Activated naive CD4-positive, alpha-beta T cell treated with anti-CD3 and anti-CD28 coated beads for 36 hours (primary cell): ENCODE measurements at regions of chr16 and their contacts with region 1.

Region 1: GRCh38 chr16:22190776-22191531 is 15.1 kb upstream of the EEF2K start:
- DNase-seq: peak; percentile 99
- H3K4me3 Mint-ChIP-seq: peak overlapping the region; percentile 83
- H3K27ac Mint-ChIP-seq: peak overlapping the region; percentile 98
- H3K4me1 Mint-ChIP-seq: peaks cover 60% of the 10 kb centered on the region
- H3K27me3 Mint-ChIP-seq: no peaks in the 10 kb centered on the region

Region 2: DNA sequence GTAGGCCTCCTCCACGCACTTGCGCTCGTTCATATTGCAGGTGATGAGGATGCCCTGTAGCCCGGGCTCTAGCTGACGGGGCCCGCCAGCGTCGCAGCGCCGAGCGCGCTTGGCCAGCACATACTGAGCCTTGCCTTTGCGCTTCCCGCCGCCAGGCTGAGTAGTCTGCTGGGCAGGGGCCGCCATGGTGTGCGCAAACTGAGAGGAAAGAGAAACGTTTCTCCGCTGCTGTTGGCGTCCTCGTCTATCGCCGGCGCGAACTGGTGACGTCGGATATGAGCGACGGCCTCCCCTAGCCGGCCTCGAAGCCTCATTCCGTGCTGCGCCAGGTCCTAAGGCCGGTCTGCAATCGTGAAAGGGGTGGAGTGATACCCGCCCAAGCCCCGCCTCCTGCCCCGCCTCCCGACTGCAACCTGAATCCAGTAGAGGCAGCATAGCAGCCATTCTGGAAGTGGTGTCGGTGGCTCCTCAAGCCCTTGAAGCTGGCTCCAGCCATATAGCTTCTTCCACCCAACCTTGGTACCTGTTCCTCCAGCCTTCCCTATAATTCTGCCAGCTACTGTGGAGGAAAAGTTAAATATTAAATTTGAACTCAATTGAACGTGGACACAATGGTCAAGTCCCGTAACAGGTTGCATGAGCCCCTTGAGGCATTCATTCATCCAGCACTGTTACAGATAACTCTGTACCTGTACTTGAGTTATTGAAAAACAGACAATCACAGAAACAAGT is 1449.2 kb before region 1 on chr16 and contains the start of gene THUMPD1:
- CTCF ChIA-PET with region 1: no interaction called
- intact Hi-C with region 1: loop called (anchors 5 kb)
- DNase-seq: peak; percentile 100
- H3K4me3 Mint-ChIP-seq: peak within 1 kb of the TSS; percentile 94
- H3K27ac Mint-ChIP-seq: peak within 1 kb of the TSS; percentile 95
- H3K4me1 Mint-ChIP-seq: peaks cover 29% of the 10 kb centered on the region
- H3K27me3 Mint-ChIP-seq: no peaks in the 10 kb centered on the region
- total RNA-seq, gene THUMPD1: 47.5 to 49.8 TPM

Region 3: GRCh38 chr16:21523411-21524067 is 667.4 kb before region 1 on chr16:
- CTCF ChIA-PET with region 1: no interaction called
- intact Hi-C with region 1: loop called (anchors 5 kb)
- DNase-seq: no peak
- H3K4me3 Mint-ChIP-seq: no peak overlapping the region
- H3K27ac Mint-ChIP-seq: no peak overlapping the region
- H3K4me1 Mint-ChIP-seq: no peaks in the 10 kb centered on the region
- H3K27me3 Mint-ChIP-seq: no peaks in the 10 kb centered on the region

Region 4: DNA sequence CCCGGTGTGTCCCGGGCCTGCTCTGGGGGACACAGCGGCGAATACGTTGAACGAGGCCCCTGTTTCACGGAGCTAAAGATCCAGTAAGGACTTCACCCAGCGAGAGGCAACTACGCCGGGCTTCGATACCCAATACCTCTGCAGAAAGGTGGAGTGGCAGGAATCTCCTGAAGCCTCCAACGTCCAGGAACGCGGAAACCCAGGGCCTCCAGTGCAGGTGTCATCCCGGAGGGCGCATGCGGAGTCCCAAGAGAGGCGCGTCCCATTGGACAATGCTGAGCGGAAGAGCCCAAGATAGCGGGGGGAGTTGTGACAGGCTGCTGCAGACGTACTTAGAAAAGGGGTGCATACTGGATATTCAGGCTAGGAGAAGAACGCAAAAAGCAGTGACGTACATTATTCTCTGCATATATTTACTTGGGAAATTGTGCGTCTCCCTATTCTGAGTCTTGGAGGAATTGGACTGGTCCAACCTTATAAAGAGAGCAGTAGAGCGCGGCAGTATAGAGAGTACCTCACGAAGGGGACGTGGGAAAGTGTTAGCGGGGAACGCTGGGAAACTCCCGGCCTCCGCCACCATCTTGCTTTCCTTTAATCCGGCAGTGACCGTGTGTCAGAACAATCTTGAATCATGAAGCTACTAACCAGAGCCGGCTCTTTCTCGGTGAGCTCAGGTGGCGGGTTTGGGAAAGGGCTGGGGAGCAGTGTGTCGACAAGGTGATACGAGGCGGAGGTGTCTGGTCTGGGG is 238.0 kb before region 1 on chr16 and contains the start of gene UQCRC2:
- CTCF ChIA-PET with region 1: interaction called, 6 read pairs
- intact Hi-C with region 1: loop called (anchors 5 kb)
- DNase-seq: peak; percentile 93
- H3K4me3 Mint-ChIP-seq: peak within 1 kb of the TSS; percentile 95
- H3K27ac Mint-ChIP-seq: peak within 1 kb of the TSS; percentile 97
- H3K4me1 Mint-ChIP-seq: peaks cover 56% of the 10 kb centered on the region
- H3K27me3 Mint-ChIP-seq: no peaks in the 10 kb centered on the region
- total RNA-seq, gene UQCRC2: 356 to 378 TPM

Region 5: GRCh38 chr16:22077700-22078313 is 113.1 kb before region 1 on chr16:
- CTCF ChIA-PET with region 1: interaction called, 60 read pairs
- intact Hi-C with region 1: loop called (anchors 1 kb)
- DNase-seq: peak; percentile 87
- H3K4me3 Mint-ChIP-seq: no peak overlapping the region
- H3K27ac Mint-ChIP-seq: no peak overlapping the region
- H3K4me1 Mint-ChIP-seq: peaks cover 7% of the 10 kb centered on the region
- H3K27me3 Mint-ChIP-seq: no peaks in the 10 kb centered on the region

Region 6: GRCh38 chr16:22240023-22240710 is 49.2 kb after region 1 on chr16:
- CTCF ChIA-PET with region 1: no interaction called
- intact Hi-C with region 1: no loop called
- DNase-seq: no peak
- H3K4me3 Mint-ChIP-seq: no peak overlapping the region
- H3K27ac Mint-ChIP-seq: peak overlapping the region; percentile 36
- H3K4me1 Mint-ChIP-seq: peaks cover 28% of the 10 kb centered on the region
- H3K27me3 Mint-ChIP-seq: no peaks in the 10 kb centered on the region

Region 7: DNA sequence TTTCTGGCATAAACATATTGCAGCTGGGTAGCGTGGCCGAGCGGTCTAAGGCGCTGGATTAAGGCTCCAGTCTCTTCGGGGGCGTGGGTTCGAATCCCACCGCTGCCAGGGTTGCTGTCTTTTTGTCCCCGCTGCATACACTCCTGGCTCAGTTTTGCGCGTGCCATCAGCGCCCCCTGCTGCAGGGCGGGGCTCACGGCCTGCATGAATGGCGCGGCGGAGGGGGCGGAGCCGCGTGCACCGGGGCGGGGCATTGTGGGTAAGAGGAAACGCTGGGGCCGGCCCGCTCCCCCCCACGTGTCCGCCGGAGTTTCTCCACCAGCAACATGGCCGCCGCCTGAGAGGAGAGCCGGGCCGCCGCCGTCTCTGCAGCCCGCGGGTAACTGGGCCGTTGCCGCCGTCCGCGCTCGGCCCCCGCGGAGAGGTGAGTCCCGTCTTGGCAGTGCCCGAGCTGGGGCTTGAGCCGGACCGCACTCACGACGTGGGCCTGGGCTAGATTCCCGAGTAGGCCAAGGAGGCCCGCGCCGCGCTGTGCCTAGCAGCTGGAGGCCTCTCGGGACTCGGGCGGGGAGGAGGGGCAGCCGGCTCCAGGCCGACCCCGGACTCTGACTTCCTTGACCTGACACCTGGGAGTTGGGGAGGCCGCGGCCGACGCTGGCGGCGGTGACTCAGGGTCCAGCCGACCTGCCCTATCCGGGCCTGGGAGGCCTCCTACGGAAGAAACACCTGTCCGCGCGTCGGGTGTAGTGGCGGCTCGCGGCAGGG is 106.3 kb after region 1 on chr16 and contains the start of gene POLR3E:
- CTCF ChIA-PET with region 1: interaction called, 20 read pairs
- intact Hi-C with region 1: loop called (anchors 1 kb)
- DNase-seq: peak; percentile 100
- H3K4me3 Mint-ChIP-seq: peak within 1 kb of the TSS; percentile 90
- H3K27ac Mint-ChIP-seq: peak within 1 kb of the TSS; percentile 94
- H3K4me1 Mint-ChIP-seq: peaks cover 37% of the 10 kb centered on the region
- H3K27me3 Mint-ChIP-seq: no peaks in the 10 kb centered on the region
- total RNA-seq, gene POLR3E: 72.9 to 74.7 TPM